Activated B cell treated with CpG ODN at 0.5 μM for 24 hours (primary cell): ENCODE measurements at regions of chr3 and their contacts with region 1.

Region 1: GRCh38 chr3:44338010-44338827 is at the start of gene TCAIM:
- DNase-seq: peak; percentile 98
- ATAC-seq: peak; percentile 91
- H3K4me3 Mint-ChIP-seq: peak within 1 kb of the TSS; percentile 96
- H3K27ac Mint-ChIP-seq: peak within 1 kb of the TSS; percentile 97
- H3K4me1 Mint-ChIP-seq: peaks cover 22% of the 10 kb centered on the region
- H3K27me3 Mint-ChIP-seq: no peaks in the 10 kb centered on the region
- CTCF ChIP-seq: no peak
- total RNA-seq, gene TCAIM: 11.8 and 12.9 TPM in 2 replicates

Region 2: DNA sequence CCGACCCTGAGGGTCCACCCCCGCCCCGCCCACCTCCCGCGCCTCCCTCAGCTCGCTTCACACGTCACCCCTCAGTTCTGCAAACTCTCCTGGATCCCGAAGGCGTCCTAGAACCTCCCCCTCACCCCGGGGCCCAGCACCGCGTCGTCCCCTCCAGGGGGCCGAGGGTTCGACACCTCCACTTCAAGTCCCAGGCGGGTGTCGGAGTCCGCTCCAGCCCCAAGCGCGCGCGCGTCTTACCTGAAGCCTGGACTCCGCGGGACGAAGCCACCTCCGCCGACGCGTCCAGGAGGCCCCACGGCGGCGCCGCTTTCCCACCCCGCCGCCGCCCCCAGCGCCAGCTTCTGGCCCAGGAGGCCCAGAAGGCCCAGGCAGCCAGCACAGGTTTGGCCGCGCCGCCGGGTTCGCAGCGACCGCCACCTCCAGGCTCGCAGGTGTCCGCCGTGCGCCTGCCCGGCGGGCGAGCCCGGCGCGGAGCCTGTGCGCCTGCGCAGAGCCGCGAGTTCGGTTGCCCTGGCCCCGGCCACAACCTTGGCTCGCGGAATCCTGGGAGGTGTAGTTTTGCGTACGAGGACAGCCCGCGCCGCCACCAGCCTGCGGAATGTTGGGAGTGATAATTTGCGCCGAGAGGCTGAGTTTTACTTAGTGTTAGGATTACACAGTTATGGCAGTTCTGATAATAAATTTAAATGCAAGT is 1232.5 kb before region 1 on chr3 and contains the start of gene POMGNT2:
- CTCF ChIA-PET with region 1: no interaction called
- POLR2A ChIA-PET with region 1: no interaction called
- intact Hi-C with region 1: loop called (anchors 5 kb)
- DNase-seq: peak; percentile 80
- ATAC-seq: peak; percentile 98
- H3K4me3 Mint-ChIP-seq: peak within 1 kb of the TSS; percentile 79
- H3K27ac Mint-ChIP-seq: no peak within 1 kb of the TSS
- H3K4me1 Mint-ChIP-seq: peaks cover 14% of the 10 kb centered on the region
- H3K27me3 Mint-ChIP-seq: no peaks in the 10 kb centered on the region
- CTCF ChIP-seq: no peak
- total RNA-seq, gene POMGNT2: 2.6 and 2.7 TPM in 2 replicates

Region 3: DNA sequence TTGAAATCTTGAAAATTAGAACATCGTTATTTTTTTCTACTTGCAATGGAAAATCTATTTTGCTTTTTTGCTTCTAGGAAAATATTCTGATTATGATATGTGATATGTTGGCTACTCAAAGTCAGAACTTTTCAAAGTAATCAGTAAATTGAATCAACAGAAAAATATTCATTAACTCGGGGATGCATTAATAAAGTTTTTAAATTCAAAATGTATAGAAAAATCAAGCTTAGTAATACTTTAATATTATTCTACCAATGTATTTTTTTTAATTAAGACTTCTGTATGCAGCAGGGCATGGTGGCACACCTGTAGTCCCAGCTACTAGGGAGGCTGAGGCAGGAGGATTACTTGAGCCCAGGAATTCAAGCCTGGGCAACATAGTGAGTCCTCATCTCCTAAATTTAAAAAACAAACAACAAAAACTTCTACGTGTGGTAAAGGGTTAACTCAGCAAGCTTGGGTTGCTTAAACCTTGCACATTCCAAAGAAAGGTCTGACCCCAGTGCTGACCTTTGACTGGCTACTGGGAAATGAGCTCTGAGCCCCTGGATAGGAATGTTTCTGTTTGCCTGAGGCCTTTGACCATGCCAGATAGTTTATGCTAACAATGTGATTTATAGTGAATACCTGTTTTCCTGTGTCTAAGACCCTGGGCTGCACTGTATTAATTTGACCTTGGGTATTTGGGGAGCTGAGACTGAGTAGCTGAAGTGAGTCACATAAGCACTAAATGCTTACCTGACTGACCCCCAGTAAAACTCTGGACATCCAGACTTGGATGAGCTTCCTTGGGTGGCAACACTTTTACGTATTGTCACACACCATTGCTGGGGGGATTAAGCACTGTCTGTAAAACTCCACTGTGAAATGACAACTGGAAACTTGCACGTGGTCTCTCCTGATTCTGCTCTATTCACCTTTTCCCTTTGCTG is 20.9 kb after region 1 on chr3:
- CTCF ChIA-PET with region 1: no interaction called
- POLR2A ChIA-PET with region 1: no interaction called
- intact Hi-C with region 1: no loop called
- DNase-seq: no peak
- ATAC-seq: no peak
- H3K4me3 Mint-ChIP-seq: no peak overlapping the region
- H3K27ac Mint-ChIP-seq: no peak overlapping the region
- H3K4me1 Mint-ChIP-seq: no peaks in the 10 kb centered on the region
- H3K27me3 Mint-ChIP-seq: no peaks in the 10 kb centered on the region
- CTCF ChIP-seq: no peak

Region 4: GRCh38 chr3:44439499-44440295 is 101.5 kb after region 1 on chr3:
- CTCF ChIA-PET with region 1: interaction called, 6 read pairs
- POLR2A ChIA-PET with region 1: interaction called, 41 read pairs
- intact Hi-C with region 1: loop called (anchors 1 kb)
- DNase-seq: no peak
- ATAC-seq: peak; percentile 90
- H3K4me3 Mint-ChIP-seq: peak overlapping the region; percentile 66
- H3K27ac Mint-ChIP-seq: peak overlapping the region; percentile 92
- H3K4me1 Mint-ChIP-seq: peaks cover 21% of the 10 kb centered on the region
- H3K27me3 Mint-ChIP-seq: no peaks in the 10 kb centered on the region
- CTCF ChIP-seq: no peak

Region 5: DNA sequence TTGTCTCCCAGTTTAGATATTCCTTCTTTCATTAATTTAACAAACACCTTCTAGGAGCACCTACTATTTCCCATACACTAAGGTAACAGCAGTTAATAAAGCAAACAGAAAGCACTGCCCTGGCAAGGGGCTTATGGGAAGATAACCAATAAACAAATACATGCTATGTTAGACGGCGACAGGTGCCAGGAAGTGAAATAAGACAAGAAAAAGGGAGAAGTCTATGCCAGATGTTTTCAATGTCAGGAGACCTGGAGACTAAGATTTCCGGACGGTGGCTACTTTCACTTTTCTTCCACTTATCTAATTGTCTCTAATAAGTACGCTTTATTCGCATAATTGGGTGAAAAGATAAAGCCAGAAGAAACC is 171.8 kb after region 1 on chr3:
- CTCF ChIA-PET with region 1: no interaction called
- POLR2A ChIA-PET with region 1: interaction called, 19 read pairs
- intact Hi-C with region 1: loop called (anchors 2 kb)
- DNase-seq: no peak
- ATAC-seq: peak; percentile 30
- H3K4me3 Mint-ChIP-seq: peak overlapping the region; percentile 95
- H3K27ac Mint-ChIP-seq: peak overlapping the region; percentile 92
- H3K4me1 Mint-ChIP-seq: peaks cover 40% of the 10 kb centered on the region
- H3K27me3 Mint-ChIP-seq: no peaks in the 10 kb centered on the region
- CTCF ChIP-seq: no peak

Region 6: DNA sequence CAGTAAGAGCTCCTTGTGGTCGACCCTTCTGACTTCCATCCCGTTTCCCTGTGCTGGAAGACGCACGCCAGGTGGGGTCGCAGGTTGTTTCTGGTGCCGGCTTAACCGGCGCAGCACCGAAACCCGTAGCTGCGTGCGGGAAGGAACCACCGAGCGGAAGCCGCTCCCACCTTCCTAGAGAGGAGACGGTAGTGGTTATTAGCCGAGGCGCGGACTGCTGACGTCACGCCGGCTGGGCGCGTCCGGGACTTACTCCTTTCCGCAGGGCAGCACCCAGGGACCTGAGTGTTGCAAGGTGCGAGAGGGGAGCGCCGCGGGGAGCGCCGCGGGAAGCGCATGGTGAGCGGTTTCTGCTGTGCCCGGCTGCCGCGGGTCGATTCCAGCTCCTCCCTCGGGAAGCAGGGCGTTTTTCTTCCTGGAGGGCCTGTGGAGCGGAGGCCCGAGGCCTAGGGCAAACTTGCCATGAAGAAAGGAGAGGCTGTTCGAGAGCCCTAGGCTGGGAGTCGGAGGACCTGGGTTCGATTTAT is 391.2 kb after region 1 on chr3 and contains the start of gene ZNF501:
- CTCF ChIA-PET with region 1: no interaction called
- POLR2A ChIA-PET with region 1: no interaction called
- intact Hi-C with region 1: loop called (anchors 1 kb)
- DNase-seq: peak; percentile 80
- ATAC-seq: peak; percentile 98
- H3K4me3 Mint-ChIP-seq: peak within 1 kb of the TSS; percentile 92
- H3K27ac Mint-ChIP-seq: peak within 1 kb of the TSS; percentile 75
- H3K4me1 Mint-ChIP-seq: peaks cover 15% of the 10 kb centered on the region
- H3K27me3 Mint-ChIP-seq: no peaks in the 10 kb centered on the region
- CTCF ChIP-seq: no peak
- total RNA-seq, gene ZNF501: 6.2 and 6.5 TPM in 2 replicates

Region 7: DNA sequence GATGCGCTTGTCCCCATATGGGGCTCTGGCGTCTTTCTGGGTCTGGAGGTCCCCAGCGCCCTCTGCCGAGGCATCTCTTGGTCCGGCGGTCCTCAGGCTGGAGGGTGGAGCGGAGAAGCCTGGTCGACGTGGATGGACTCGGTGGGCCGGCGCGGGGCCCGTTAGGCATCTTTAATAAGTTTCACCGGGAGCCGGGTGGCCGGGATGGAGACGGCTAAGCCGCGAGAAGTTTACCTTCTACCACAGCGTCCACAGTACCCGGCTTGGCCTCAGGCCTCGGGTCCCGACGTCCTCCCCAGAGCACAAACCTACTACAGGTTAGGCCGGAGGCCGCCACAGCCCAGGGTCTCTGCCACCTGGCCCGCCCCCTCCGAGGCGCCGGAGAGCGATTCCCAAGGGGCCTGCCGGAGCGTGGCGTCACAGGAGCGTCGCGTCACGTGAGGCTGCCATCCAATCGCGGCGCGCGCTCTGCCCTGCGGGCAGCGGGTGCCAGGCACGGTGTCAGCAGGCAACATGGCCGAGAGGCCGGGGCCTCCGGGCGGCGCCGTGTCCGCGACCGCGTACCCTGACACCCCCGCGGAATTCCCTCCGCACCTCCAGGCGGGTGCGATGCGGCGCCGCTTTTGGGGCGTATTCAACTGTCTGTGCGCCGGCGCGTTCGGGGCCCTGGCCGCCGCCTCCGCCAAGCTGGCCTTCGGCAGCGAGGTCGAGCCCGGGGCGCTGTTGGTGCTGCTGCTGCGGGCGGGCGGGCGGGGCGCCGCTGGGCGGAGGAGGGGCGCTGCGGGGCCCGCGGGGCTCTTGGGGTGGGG is 523.4 kb after region 1 on chr3 and contains the start of gene TMEM42:
- CTCF ChIA-PET with region 1: no interaction called
- POLR2A ChIA-PET with region 1: interaction called, 4 read pairs
- intact Hi-C with region 1: loop called (anchors 1 kb)
- DNase-seq: peak; percentile 90
- ATAC-seq: peak; percentile 97
- H3K4me3 Mint-ChIP-seq: peak within 1 kb of the TSS; percentile 88
- H3K27ac Mint-ChIP-seq: peak within 1 kb of the TSS; percentile 85
- H3K4me1 Mint-ChIP-seq: peaks cover 17% of the 10 kb centered on the region
- H3K27me3 Mint-ChIP-seq: no peaks in the 10 kb centered on the region
- CTCF ChIP-seq: no peak
- total RNA-seq, gene TMEM42: 12.4 and 13.1 TPM in 2 replicates